Activated T-helper 1 cell treated with anti-CD3 and anti-CD28 coated beads, Interleukin-12 subunit alpha, Interleukin-12 subunit beta, Interleukin-2, Interleukin-4 antibody, amounts not matched to agents 30 ng/mL and 10 ng/mL and 1 ng/mL, durations not matched to agents 14 hours and 24 hours and 36 hours (primary cell): ENCODE measurements at regions of chr7 and their contacts with region 1.

Region 1: GRCh38 chr7:32891800-32892520 is 400 bp upstream of the KBTBD2 start:
- DNase-seq: peak; percentile 98
- H3K4me3 Mint-ChIP-seq: peak overlapping the region; percentile 90
- H3K27ac Mint-ChIP-seq: peak overlapping the region; percentile 95
- H3K4me1 Mint-ChIP-seq: peaks cover 61% of the 10 kb centered on the region
- H3K27me3 Mint-ChIP-seq: peaks cover 2% of the 10 kb centered on the region

Region 2: GRCh38 chr7:32490127-32490822 is 401.7 kb before region 1 on chr7 and contains the start of gene LSM5:
- intact Hi-C with region 1: loop called (anchors 1 kb)
- DNase-seq: peak; percentile 85
- H3K4me3 Mint-ChIP-seq: peak within 1 kb of the TSS; percentile 89
- H3K27ac Mint-ChIP-seq: peak within 1 kb of the TSS; percentile 91
- H3K4me1 Mint-ChIP-seq: peaks cover 24% of the 10 kb centered on the region
- H3K27me3 Mint-ChIP-seq: no peaks in the 10 kb centered on the region
- total RNA-seq, gene LSM5: 79.6 and 84.3 TPM in 2 replicates

Region 3: GRCh38 chr7:32569388-32570289 is 322.3 kb before region 1 on chr7:
- intact Hi-C with region 1: no loop called
- DNase-seq: no peak
- H3K4me3 Mint-ChIP-seq: no peak overlapping the region
- H3K27ac Mint-ChIP-seq: no peak overlapping the region
- H3K4me1 Mint-ChIP-seq: no peaks in the 10 kb centered on the region
- H3K27me3 Mint-ChIP-seq: no peaks in the 10 kb centered on the region

Region 4: GRCh38 chr7:32846701-32847100 is 45.3 kb before region 1 on chr7:
- intact Hi-C with region 1: loop called (anchors 1 kb)
- DNase-seq: peak; percentile 74
- H3K4me3 Mint-ChIP-seq: peak overlapping the region; percentile 19
- H3K27ac Mint-ChIP-seq: no peak overlapping the region
- H3K4me1 Mint-ChIP-seq: peaks cover 11% of the 10 kb centered on the region
- H3K27me3 Mint-ChIP-seq: peaks cover 28% of the 10 kb centered on the region

Region 5: DNA sequence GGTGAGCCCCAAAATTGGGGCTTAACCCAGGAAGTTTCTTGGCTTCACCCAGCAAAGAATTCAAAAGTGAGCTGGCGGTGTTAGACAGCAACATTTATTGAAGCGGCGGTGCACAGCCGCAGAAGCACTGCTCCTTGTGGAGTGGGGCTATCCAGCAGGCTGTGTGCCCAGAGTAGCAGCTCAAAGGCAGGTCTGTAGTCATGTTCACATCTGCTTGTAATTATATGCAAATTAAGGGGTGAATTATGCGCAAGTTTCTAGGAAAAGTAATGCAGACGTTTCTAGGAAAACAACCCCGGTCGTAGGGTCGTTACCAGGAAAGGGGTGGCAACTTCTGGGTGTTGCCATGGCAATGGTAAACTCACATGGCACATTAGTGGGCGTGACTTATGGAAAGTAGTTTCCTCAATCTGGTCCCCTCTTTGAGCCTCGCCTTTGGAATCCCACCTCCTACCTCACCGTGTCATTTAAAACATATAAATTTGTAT is 13.3 kb after region 1 on chr7:
- intact Hi-C with region 1: loop called (anchors 1 kb)
- DNase-seq: peak; percentile 83
- H3K4me3 Mint-ChIP-seq: peak overlapping the region; percentile 80
- H3K27ac Mint-ChIP-seq: peak overlapping the region; percentile 97
- H3K4me1 Mint-ChIP-seq: peaks cover 14% of the 10 kb centered on the region
- H3K27me3 Mint-ChIP-seq: no peaks in the 10 kb centered on the region

Region 6: GRCh38 chr7:33050535-33051318 is 158.8 kb after region 1 on chr7:
- intact Hi-C with region 1: loop called (anchors 2 kb)
- DNase-seq: no peak
- H3K4me3 Mint-ChIP-seq: no peak overlapping the region
- H3K27ac Mint-ChIP-seq: peak overlapping the region; percentile 12
- H3K4me1 Mint-ChIP-seq: peaks cover 40% of the 10 kb centered on the region
- H3K27me3 Mint-ChIP-seq: no peaks in the 10 kb centered on the region

Region 7: DNA sequence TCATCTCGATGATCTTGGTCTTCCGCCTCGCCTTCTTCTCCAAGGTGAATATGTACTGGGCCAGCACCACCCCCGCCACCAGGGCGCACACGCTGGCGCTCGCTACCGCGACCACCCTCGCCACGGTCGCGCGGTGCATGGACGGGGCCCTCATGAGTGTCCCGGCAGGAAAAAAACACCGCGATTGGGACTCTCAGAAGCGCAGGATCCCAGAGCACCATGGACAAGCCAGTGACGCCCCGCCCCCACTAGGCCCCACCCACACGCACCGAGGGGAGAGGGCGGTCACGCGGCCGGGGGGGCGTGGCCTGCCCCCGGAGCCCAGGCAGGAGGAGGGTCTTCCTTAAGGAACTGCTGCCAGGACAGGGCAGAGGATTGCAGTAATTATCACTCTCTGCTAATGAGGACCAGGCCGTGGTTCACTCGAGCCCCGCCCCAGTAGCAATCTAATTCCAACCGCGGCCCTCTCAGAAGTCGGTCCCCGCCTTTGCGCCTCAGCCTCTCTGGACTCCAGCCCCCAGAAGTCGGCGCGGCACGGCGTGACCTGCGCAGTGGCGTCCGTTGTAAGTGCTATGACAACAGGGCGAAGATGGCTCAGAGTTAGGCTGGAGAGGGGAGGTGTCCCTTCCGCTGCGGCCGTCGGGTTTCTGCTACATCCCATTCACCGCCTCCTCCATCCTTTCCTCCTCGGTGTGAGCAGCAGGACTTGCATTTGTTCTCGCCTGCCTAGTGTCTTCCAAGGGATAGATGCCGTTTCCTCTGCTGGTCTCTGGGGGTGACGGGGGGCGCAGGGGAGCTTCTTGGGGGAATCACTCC is 237.2 kb after region 1 on chr7 and contains the start of gene BBS9:
- intact Hi-C with region 1: loop called (anchors 1 kb)
- DNase-seq: peak; percentile 88
- H3K4me3 Mint-ChIP-seq: peak within 1 kb of the TSS; percentile 94
- H3K27ac Mint-ChIP-seq: peak within 1 kb of the TSS; percentile 87
- H3K4me1 Mint-ChIP-seq: peaks cover 20% of the 10 kb centered on the region
- H3K27me3 Mint-ChIP-seq: peaks cover 5% of the 10 kb centered on the region
- total RNA-seq, gene BBS9: 3.8 and 6.3 TPM in 2 replicates